SK-MEL-5 (cell line): ENCODE measurements at regions of chr15 and their contacts with region 1.

Region 1: DNA sequence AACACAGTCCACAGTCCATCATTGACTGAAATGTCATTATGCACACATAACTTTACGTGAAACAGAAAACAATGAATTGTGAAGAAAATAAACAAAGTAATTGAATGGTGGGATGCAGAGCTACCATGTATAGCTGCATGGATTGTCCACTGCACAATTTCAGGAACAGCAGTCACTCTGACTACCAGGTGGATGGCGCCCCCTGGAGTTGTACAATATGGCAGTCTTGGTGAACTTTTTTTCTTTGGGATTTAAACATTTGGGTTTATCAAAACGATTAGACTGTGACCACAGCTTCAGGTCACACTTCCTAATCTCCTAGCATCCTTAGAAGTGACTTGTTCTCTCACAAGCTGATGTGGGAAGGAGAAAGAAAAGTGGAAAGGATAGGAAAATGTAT is 48.9 kb upstream of the TCF12 start:
- DNase-seq: peak; percentile 62

Region 2: GRCh38 chr15:56491110-56491722 is 378.4 kb before region 1 on chr15:
- in situ Hi-C with region 1: loop called (anchors 25 kb)
- DNase-seq: peak; percentile 80